Heart left ventricle (tissue), 16 donors: ENCODE measurements at regions of chr1 and their contacts with region 1.

Region 1: DNA sequence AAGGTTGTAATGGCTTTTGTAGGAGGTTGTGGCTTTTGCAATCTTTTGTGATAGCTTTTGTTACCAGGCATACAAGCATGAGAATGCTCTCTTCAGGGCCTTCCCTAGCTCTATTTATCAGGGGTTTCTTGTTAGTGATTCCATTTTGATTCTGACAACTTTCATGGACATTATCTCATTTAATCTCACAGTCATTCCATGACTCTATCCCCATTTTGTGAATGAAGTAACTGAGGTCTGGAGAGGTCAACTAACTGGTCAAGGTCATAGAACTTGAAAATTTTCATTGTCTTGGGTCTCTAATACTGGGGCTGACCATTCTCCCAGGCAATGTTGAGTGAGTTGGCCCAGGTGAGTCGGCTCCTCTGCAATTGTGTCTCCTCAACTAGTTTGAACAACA is 11.2 kb upstream of the LAMTOR5 start:
- DNase-seq: no peak
- ATAC-seq: no peak
- H3K4me3 ChIP-seq: no peak overlapping the region
- H3K27ac ChIP-seq: no peak overlapping the region
- H3K4me1 ChIP-seq: peaks cover 0 to 18% (median 10%) of the 10 kb centered on the region in 12 donors
- H3K27me3 ChIP-seq: no peaks in the 10 kb centered on the region
- CTCF ChIP-seq: no peak
- POLR2A ChIP-seq: no peak

Region 2: DNA sequence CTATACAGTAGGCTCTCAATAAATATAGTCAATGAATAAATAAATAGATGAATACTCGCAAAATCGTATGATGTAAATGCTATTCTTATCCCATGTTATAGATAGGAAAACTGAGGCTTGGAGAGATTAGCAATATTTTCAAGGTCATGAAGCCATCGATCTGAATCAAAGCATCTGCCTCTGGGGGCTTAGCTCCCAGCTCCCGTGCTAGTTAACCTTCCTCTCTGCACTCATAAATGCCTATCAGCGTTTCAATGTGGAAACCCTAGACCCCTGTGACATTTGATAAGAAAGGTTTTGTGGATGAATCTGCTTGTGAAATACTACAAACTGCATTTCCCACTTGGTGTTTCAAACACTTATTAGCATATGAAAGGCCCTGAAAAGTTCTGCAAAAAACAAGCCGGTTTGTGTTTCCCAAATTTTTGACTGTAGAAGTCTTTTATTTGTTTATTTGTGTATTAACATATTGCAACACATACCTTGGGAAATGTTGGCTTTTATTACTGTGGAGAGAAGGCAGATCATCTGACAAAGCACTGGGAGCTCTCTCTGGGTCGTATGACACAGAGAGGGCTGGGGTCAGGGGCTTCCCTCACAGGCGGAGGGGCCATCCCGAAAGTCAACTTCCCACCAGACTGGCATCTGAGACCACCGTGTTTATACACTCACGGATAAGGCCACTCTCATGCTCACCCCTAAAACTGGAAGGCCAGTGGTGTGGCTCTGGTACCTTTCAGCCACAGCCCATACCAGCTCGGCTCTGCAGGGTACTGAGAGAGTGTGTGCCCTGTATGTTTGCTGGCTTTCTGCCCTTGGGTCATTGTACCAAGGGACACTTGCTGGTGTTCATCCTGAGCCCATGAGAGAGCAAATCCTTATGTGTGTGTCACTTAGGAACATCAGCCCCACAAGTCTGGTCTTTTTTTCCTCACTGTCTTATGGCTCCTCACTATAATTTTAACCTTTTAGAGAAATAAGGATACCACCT is 31.2 kb after region 1 on chr1:
- intact Hi-C with region 1: loop called in 1 of 10 experiments (anchors 5 kb)
- DNase-seq: no peak
- ATAC-seq: no peak
- H3K4me3 ChIP-seq: no peak overlapping the region
- H3K27ac ChIP-seq: no peak overlapping the region
- H3K4me1 ChIP-seq: no peaks in the 10 kb centered on the region
- H3K27me3 ChIP-seq: peaks cover 0 to 20% (median 0%) of the 10 kb centered on the region in 9 donors
- CTCF ChIP-seq: no peak
- POLR2A ChIP-seq: no peak